ENCODE measurements at regions of chr18 and their contacts with region 1.

Region 1: DNA sequence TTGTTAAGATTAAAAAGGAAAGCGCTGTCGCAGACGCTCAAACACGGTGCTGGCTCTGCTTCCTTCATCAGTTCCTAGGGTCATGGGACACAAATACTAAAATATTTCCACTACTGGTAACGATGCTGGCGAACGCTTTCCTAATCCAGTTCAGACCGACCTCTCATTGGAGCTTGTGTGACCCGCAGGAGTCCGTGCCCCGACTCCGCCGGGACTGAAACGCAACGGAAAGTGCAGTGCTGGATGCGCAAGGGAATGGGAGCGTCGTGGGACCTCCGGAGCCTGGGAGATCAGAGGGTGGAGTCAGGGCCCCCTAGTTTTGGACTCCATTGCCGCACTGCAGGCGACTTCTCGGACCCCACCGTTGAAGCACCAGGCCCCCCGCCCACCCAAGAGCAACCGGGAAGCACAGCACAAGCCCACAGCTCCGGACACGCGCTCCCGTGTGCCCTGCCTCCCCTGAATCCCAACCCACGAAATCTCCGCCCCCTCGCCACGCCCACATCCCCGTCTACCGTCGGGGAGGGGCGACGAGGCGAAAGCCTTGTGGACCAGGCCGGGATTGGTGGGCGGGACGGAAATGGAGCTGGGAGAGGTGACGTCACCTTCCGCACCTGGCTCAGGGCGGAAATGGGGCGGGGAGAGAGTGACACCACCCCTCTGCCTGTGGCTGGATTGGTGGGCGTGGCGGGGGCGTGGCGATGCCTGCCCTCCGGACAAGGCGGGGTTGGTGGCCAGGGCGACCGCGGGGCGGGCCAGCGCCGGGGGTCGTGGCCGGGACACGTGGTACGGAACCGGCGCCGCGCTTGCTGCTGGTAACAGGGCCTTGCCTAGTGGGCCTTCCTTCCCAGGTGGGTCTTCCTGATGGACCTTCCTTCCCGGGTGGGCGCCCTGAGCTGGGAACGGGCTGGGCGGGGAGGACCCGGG is at the start of gene CNDP2:
- DNase-seq: peak; percentile 97
- H3K4me3 ChIP-seq: peak within 1 kb of the TSS; percentile 70
- H3K4me3 Mint-ChIP-seq: peak within 1 kb of the TSS; percentile 93
- H3K27ac Mint-ChIP-seq: peak within 1 kb of the TSS; percentile 93
- H3K4me1 ChIP-seq: no peaks in the 10 kb centered on the region
- H3K4me1 Mint-ChIP-seq: no peaks in the 10 kb centered on the region
- H3K27me3 ChIP-seq: no peaks in the 10 kb centered on the region
- H3K27me3 Mint-ChIP-seq: no peaks in the 10 kb centered on the region
- CTCF ChIP-seq: no peak
- total RNA-seq, gene CNDP2: 95.1 and 113 TPM in 2 replicates

Region 2: GRCh38 chr18:74196220-74197119 is 299.4 kb before region 1 on chr18:
- CTCF ChIA-PET with region 1: no interaction called
- POLR2A ChIA-PET with region 1: no interaction called
- intact Hi-C with region 1: loop called (anchors 1 kb)
- DNase-seq: peak; percentile 51 to 60
- H3K4me3 ChIP-seq: peak overlapping the region; percentile 24; the same call in 1 of the 2 replicates
- H3K4me3 Mint-ChIP-seq: peak overlapping the region; percentile 43
- H3K27ac Mint-ChIP-seq: no peak overlapping the region
- H3K4me1 ChIP-seq: no peaks in the 10 kb centered on the region
- H3K4me1 Mint-ChIP-seq: peaks cover 9% of the 10 kb centered on the region
- H3K27me3 ChIP-seq: no peaks in the 10 kb centered on the region
- H3K27me3 Mint-ChIP-seq: no peaks in the 10 kb centered on the region
- CTCF ChIP-seq: peak; percentile 26 to 61

Region 3: DNA sequence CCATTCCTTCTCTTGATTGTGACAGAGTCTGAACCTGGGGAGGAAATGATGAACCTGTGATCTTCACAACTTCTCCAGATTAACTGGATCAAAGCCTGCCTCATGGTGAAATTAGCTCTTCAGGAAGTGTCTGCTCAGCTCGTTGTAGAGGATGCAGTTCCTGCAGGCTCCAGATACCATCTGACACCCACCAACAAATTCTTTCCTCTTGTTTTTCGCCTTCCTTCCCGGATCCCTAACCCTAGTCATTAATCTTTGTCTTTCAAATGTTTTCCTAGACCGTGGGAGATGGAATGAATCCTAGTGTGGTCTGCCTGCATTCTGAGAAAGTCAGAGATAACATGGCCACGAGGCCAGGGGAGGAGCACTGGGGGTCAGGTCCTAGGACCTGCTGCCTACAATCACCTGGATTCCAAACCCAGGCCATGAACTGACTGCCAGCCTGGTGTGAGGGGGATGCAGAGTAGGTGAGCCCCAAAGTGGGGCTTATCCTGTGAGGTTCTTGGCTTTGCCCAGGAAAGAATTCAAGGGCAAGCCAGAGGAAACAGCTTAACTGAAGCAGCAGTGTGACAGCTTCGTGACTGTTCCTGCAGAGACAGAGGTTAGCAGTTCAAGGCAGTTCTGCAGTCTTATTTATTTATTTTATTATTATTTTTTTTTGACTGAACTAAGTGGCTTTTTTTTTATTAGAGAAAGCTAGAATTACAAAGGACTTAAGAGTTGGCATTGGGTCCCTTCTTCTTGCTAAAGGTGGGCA is 106.5 kb before region 1 on chr18:
- CTCF ChIA-PET with region 1: interaction called, 4 read pairs
- POLR2A ChIA-PET with region 1: no interaction called
- intact Hi-C with region 1: loop called (anchors 1 kb)
- DNase-seq: no peak
- H3K4me3 ChIP-seq: no peak overlapping the region
- H3K4me3 Mint-ChIP-seq: no peak overlapping the region
- H3K27ac Mint-ChIP-seq: no peak overlapping the region
- H3K4me1 ChIP-seq: no peaks in the 10 kb centered on the region
- H3K4me1 Mint-ChIP-seq: no peaks in the 10 kb centered on the region
- H3K27me3 ChIP-seq: no peaks in the 10 kb centered on the region; the same call in 1 of the 2 replicates
- H3K27me3 Mint-ChIP-seq: peaks cover 3% of the 10 kb centered on the region
- CTCF ChIP-seq: no peak

Region 4: DNA sequence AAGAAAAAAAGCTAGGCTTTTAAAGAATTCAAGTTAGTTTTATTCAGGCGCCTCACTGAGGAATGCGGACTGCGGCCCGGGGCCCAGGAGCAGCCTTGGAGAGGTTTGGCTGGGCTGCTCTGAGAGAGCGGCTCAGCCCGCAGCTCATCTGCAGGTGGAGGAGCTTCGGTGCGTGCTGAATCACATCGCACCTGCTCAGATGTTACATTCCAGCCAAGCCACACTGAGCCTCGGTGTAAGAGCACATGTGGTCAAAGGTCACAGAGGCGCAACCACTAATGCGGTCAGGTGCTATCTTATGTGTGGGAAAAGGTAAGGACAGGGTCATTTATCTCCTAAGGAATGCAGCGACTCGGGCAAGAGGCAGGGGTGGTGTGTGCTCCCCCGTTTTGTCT is 21.4 kb after region 1 on chr18:
- CTCF ChIA-PET with region 1: interaction called, 6 read pairs
- POLR2A ChIA-PET with region 1: interaction called, 6 read pairs
- intact Hi-C with region 1: loop called (anchors 1 kb)
- DNase-seq: peak; percentile 81 to 93
- H3K4me3 ChIP-seq: no peak overlapping the region
- H3K4me3 Mint-ChIP-seq: peak overlapping the region; percentile 45
- H3K27ac Mint-ChIP-seq: peak overlapping the region; percentile 96
- H3K4me1 ChIP-seq: peaks cover 33% of the 10 kb centered on the region
- H3K4me1 Mint-ChIP-seq: peaks cover 6% of the 10 kb centered on the region
- H3K27me3 ChIP-seq: no peaks in the 10 kb centered on the region
- H3K27me3 Mint-ChIP-seq: no peaks in the 10 kb centered on the region
- CTCF ChIP-seq: no peak

Region 5: DNA sequence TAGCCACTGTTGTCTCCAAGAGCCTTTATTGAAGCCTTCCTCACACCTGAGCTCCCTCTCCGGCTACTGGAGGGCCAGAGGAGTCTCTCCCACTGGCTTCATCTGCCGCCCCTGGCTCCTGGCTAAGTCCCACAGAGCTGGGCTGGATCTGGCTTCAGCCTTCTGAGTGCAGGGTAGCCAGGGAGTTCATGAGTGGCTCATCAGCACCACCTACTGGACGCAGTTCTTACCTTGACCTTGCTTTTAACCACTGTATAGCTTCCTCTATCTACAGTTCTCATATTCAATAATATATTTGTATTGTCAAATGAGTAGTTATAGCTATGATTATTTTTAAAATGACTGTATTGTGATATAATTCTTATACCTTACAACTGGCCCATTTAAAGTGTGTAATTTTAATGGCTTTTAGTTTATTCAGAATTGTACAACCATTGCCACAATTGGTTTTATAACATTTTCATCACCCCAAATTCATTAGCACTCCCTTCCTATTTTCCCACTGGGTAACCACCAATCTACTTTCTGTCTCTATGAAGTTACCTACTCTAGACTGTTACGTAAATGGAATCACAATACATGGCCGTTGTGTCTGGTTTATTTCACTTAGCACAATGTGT is 56.2 kb after region 1 on chr18:
- CTCF ChIA-PET with region 1: interaction called, 17 read pairs
- POLR2A ChIA-PET with region 1: interaction called, 7 read pairs
- intact Hi-C with region 1: loop called (anchors 1 kb)
- DNase-seq: peak; percentile 70 to 71
- H3K4me3 ChIP-seq: no peak overlapping the region
- H3K4me3 Mint-ChIP-seq: no peak overlapping the region
- H3K27ac Mint-ChIP-seq: no peak overlapping the region
- H3K4me1 ChIP-seq: no peaks in the 10 kb centered on the region
- H3K4me1 Mint-ChIP-seq: no peaks in the 10 kb centered on the region
- H3K27me3 ChIP-seq: no peaks in the 10 kb centered on the region
- H3K27me3 Mint-ChIP-seq: no peaks in the 10 kb centered on the region
- CTCF ChIP-seq: peak; percentile 50 to 57